Colonic mucosa (tissue), 4 donors: ENCODE measurements at regions of chr14 and their contacts with region 1.

Region 1: DNA sequence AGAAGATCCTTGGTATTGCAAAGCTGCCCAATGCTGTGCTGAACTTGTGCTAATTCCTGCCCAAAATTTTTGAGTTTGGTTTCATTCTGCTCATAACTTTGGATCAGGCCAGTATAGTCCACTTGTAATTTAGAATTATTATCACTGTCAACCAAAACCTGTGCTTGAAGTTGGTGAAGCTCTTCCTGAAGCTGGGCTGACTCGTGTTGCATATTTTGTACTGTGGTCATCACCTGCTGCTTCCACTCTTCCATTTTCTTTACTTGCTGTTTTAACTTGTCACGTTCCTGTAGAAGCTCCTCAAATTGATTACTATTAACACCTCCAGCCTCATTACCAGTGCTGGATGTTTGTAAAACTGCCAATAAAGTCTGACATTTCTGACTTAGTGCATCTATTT is 35.8 kb downstream of the TRIP11 start:
- DNase-seq: no peak
- H3K4me3 ChIP-seq: no peak overlapping the region
- H3K27ac ChIP-seq: no peak overlapping the region
- H3K4me1 ChIP-seq: no peaks in the 10 kb centered on the region
- H3K27me3 ChIP-seq: no peaks in the 10 kb centered on the region
- CTCF ChIP-seq: no peak

Region 2: GRCh38 chr14:91482263-91483013 is 521.6 kb before region 1 on chr14:
- intact Hi-C with region 1: loop called (anchors 10 kb)
- DNase-seq: no peak
- H3K4me3 ChIP-seq: no peak overlapping the region
- H3K27ac ChIP-seq: no peak overlapping the region
- H3K4me1 ChIP-seq: no peaks in the 10 kb centered on the region
- H3K27me3 ChIP-seq: no peaks in the 10 kb centered on the region
- CTCF ChIP-seq: no peak

Region 3: DNA sequence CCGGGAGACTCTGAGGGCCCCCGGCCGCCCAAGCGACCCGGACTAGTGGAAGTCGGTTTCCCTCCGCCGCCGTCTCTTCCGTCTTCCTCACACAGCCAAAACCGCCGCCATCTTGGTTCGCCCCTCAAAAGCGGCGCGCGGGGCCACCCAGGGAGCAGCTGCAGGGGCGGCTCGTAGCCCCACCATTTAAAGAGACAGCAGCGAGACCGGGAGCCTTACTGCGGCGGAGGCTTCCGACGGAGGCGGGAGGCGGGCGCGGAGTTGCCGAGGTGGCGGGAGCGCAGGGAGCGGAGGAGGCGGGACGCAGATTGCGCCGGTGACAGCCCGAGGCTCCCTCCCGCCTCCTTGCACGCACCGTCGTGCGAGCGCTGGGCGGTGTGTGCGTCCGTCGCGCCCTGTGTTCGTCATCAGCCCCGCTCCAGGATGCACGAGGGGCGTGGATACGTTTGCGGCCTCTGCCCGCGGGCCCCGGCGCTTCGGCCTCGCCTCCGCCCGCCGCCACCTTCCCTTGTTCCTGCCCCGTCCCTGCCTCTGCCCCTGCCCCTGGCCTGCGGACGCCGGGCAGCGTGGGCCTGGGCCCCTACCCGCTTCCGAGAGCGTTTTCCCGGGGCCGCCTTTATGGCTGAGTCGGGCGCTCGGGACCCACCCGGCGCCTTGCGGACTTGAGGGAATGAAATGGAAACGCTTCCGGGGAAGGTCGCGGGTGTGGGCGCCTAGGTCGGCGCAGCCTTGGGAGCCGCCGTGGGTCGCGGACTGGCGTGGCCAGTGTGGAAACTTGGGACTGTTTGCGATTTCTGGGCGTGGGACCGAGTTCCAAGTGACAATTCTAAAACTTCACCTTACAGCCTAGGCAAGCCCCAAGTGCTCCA is 493.7 kb before region 1 on chr14 and contains the start of gene PPP4R3A:
- intact Hi-C with region 1: no loop called
- DNase-seq: peak; percentile 93
- H3K4me3 ChIP-seq: peak within 1 kb of the TSS; percentile 91
- H3K27ac ChIP-seq: peak within 1 kb of the TSS; percentile 99
- H3K4me1 ChIP-seq: peaks cover 8% of the 10 kb centered on the region
- H3K27me3 ChIP-seq: no peaks in the 10 kb centered on the region
- CTCF ChIP-seq: no peak
- total RNA-seq, gene PPP4R3A: 79.3 to 90.9 TPM

Region 4: GRCh38 chr14:91911474-91912032 is 92.5 kb before region 1 on chr14:
- intact Hi-C with region 1: no loop called
- DNase-seq: peak; percentile 39
- H3K4me3 ChIP-seq: no peak overlapping the region
- H3K27ac ChIP-seq: no peak overlapping the region
- H3K4me1 ChIP-seq: peaks cover 3% of the 10 kb centered on the region
- H3K27me3 ChIP-seq: no peaks in the 10 kb centered on the region
- CTCF ChIP-seq: peak; percentile 49

Region 5: GRCh38 chr14:91947471-91948184 is 56.4 kb before region 1 on chr14 and contains the start of gene FBLN5:
- intact Hi-C with region 1: no loop called
- DNase-seq: peak; percentile 38
- H3K4me3 ChIP-seq: peak within 1 kb of the TSS; percentile 40
- H3K27ac ChIP-seq: peak within 1 kb of the TSS; percentile 46
- H3K4me1 ChIP-seq: no peaks in the 10 kb centered on the region
- H3K27me3 ChIP-seq: peaks cover 9% of the 10 kb centered on the region
- CTCF ChIP-seq: no peak
- total RNA-seq, gene FBLN5: 4.2 to 14.5 TPM